ENCODE measurements at regions of chr14 and their contacts with region 1.

Region 1: GRCh38 chr14:35404449-35405303 is at the start of gene NFKBIA:
- DNase-seq: peak; percentile 93 to 97 (median 97)
- ATAC-seq: peak; percentile 67 to 72
- H3K4me3 ChIP-seq: peak within 1 kb of the TSS; percentile 81
- H3K27ac ChIP-seq: peak within 1 kb of the TSS; percentile 98
- H3K4me1 ChIP-seq: no peaks in the 10 kb centered on the region
- H3K27me3 ChIP-seq: no peaks in the 10 kb centered on the region
- total RNA-seq, gene NFKBIA: 74.0 to 125 (median 103) TPM

Region 2: DNA sequence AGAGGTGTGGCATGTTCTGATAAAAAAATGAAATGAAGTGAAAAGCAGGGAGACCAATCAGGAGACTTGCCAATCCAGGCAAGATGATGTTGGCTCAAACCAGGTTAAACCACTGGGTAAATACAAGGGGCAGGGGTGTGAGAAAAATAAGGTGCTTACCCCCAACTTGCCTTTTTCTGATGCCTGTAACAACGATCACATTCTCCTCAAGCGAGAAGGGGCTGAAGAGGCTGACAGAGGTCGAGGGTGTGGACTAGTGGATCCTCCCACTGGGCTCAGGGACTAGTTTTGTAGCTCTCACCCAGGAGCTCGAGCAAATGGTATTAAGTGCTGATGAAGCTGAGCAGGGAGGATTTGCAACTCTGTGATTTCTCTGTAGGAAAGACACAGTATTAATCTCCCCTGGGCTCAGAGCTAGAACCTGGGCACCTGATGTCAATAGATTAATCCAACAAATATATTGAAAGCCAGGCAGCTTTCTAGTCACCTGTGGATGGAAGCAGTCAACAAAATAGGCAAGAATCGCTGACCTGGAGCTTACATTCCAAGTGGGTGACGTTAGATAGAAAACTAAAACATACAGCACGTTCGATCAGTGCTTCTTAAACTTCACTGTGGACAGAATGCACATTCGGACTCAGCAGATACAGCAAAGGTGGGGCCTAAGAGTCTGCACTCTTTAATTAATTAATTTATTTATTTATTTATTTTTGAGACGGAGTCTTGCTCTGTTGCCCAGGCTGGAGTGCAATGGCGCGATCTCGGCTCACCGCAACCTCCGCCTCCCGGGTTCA is 849.9 kb before region 1 on chr14:
- intact Hi-C with region 1: no loop called
- DNase-seq: no peak
- ATAC-seq: no peak
- H3K4me3 ChIP-seq: no peak overlapping the region
- H3K27ac ChIP-seq: peak overlapping the region; percentile 63
- H3K4me1 ChIP-seq: no peaks in the 10 kb centered on the region
- H3K27me3 ChIP-seq: no peaks in the 10 kb centered on the region

Region 3: GRCh38 chr14:35215110-35215876 is 189.4 kb before region 1 on chr14:
- intact Hi-C with region 1: loop called in 1 of 4 experiments (anchors 5 kb)
- DNase-seq: no peak
- ATAC-seq: peak in 1 of 2 donors; percentile 51
- H3K4me3 ChIP-seq: no peak overlapping the region
- H3K27ac ChIP-seq: no peak overlapping the region
- H3K4me1 ChIP-seq: no peaks in the 10 kb centered on the region
- H3K27me3 ChIP-seq: no peaks in the 10 kb centered on the region

Region 4: DNA sequence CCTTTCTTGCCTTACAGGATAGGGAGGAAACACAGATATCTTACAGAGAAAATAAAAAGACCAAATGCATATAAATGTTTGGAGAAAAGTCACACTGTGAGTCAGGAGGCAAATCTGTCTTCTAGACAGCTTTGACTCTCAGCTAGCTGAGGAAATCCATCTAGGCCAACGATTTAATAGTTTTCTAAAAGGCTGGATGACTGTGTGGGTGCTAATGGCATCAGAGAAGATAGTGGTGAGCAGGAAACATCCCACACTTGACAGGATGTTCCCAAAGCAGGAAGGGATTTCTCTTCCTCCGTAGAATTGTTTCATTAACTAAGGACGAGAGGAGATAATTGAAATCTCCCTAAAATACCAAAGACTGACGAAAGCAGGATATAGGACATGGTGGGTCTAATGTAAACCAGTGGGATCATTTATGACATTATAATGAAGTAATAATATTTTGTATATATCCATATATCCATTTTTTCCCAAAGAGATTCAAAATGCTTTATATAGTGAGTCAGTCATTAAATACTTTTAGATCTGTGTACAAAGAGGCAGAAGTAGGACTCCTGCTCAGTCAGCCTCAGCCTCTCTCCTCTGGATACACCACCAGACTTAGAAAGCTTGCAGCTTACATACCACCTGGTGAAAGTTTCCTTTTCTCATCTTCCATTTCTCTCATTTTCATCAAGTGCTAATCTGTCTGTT is 156.8 kb before region 1 on chr14:
- intact Hi-C with region 1: no loop called
- DNase-seq: no peak
- ATAC-seq: no peak
- H3K4me3 ChIP-seq: no peak overlapping the region
- H3K27ac ChIP-seq: no peak overlapping the region
- H3K4me1 ChIP-seq: no peaks in the 10 kb centered on the region
- H3K27me3 ChIP-seq: no peaks in the 10 kb centered on the region

Region 5: DNA sequence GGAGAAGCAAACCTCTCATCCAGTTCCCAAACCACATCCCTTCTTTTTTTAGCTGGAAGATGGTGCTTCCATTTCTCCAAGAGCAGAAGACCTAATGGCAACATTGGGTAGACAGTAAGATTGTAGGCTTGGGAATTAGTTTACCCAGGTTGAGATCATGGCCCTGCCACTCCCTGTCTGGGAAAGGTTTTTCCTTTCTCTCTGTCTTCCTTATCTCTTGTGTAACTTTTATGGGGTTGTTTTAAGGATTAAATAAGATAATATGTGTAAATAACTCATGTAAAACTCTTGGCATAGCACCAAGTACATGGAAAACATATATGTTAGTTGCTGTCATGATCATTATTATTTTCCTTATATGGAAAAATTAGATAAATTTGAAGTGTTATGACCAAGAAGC is 135.7 kb before region 1 on chr14:
- intact Hi-C with region 1: no loop called
- DNase-seq: no peak
- ATAC-seq: no peak
- H3K4me3 ChIP-seq: no peak overlapping the region
- H3K27ac ChIP-seq: no peak overlapping the region
- H3K4me1 ChIP-seq: no peaks in the 10 kb centered on the region
- H3K27me3 ChIP-seq: no peaks in the 10 kb centered on the region

Region 6: GRCh38 chr14:35285168-35286002 is 119.3 kb before region 1 on chr14:
- intact Hi-C with region 1: loop called in 3 of 4 experiments (anchors 5 to 10 kb)
- DNase-seq: no peak
- ATAC-seq: peak; percentile 29 to 70
- H3K4me3 ChIP-seq: no peak overlapping the region
- H3K27ac ChIP-seq: no peak overlapping the region
- H3K4me1 ChIP-seq: peaks cover 2% of the 10 kb centered on the region
- H3K27me3 ChIP-seq: no peaks in the 10 kb centered on the region

Region 7: DNA sequence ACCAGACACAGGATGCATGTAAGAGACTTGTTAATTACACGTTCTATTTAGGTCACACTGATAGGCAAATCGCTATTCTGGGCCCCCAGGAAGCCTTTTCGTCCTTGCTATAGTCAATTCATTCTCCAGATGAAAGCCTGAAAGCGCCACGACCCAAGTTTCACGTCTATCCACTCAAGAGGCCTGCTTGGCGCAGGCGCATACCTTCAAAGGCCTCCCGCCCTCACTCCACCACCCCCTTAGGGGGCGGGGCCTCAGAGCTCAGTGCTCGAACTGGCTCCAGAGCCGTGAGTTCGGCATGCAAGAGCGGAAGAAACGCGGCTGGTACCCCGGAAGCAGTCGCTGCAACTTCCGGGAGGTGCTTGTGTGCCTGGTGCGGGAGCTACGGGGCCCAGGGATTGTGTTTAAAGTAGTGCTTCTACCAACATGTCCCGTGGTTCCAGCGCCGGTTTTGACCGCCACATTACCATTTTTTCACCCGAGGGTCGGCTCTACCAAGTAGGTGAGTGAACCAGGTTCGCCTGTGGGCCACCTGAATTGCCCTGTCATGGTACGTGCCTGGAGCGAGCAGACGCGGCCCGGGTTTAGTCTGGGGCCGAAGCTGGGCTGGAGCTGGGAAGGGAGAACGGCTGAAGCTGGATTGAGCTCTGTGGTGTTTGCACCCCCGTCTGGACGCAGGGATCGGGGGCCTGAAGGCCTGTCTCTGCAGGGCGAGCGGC is 112.5 kb before region 1 on chr14 and contains the start of gene PSMA6:
- intact Hi-C with region 1: loop called (anchors 2 to 10 kb)
- DNase-seq: peak; percentile 99 to 100 (median 99)
- ATAC-seq: peak; percentile 99
- H3K4me3 ChIP-seq: peak within 1 kb of the TSS; percentile 90
- H3K27ac ChIP-seq: peak within 1 kb of the TSS; percentile 94
- H3K4me1 ChIP-seq: peaks cover 2% of the 10 kb centered on the region
- H3K27me3 ChIP-seq: no peaks in the 10 kb centered on the region
- total RNA-seq, gene PSMA6: 149 to 175 (median 163) TPM

Region 8: GRCh38 chr14:35341446-35342159 is 63.1 kb before region 1 on chr14:
- intact Hi-C with region 1: loop called in 3 of 4 experiments (anchors 2 to 5 kb)
- DNase-seq: peak; percentile 98 to 99 (median 98)
- ATAC-seq: peak; percentile 93 to 95
- H3K4me3 ChIP-seq: peak overlapping the region; percentile 6
- H3K27ac ChIP-seq: peak overlapping the region; percentile 95
- H3K4me1 ChIP-seq: peaks cover 31% of the 10 kb centered on the region
- H3K27me3 ChIP-seq: no peaks in the 10 kb centered on the region